ENCODE measurements at regions of chr19 and their contacts with region 1.

Region 1: DNA sequence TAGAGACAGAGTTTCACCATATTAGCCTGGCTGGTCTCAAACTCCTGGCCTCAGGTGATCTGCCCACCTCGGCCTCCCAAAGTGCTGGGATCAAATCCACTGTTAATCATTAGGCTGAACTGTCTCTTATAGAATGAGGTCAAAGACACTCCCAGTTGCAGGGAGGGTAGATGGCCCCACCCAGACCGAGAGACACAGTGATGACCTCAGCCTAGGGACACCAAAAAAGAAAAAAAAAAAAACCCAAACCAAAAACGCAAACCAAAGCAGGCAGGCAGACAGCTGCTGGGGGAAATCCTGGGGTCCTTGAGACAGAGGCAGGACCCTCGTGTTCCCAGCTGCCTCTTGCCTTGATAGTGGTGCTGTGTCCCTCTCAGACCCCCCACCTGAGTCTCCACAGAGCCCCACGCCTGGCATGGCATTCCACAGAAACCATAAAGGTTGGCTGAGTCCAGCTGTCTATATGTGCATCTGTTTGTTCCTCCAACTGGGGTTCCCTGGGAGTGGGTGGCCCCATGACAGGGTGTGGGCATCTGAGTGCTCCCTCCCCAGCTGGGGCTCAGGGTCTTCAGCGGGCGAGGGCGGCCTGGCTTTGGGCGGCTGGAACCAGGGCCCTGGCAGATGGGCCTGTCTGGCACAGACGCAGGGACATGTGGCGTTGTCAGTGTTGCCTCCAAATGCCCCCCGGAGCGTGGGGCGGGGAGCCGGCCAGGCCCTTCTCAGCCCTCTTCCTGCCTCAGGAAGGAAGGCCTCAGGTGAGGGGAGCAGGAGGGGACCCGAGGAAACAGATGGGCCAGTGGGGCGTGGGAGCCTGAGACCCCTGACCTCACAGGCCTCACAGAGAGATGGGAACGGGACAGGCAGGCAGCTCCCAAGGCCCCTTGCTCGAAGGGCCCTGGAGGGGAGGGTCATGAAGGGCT is 5.2 kb downstream of the DAND5 start:
- DNase-seq: no peak
- H3K4me3 ChIP-seq: no peak overlapping the region
- CTCF ChIP-seq: no peak
- POLR2A ChIP-seq: no peak

Region 2: DNA sequence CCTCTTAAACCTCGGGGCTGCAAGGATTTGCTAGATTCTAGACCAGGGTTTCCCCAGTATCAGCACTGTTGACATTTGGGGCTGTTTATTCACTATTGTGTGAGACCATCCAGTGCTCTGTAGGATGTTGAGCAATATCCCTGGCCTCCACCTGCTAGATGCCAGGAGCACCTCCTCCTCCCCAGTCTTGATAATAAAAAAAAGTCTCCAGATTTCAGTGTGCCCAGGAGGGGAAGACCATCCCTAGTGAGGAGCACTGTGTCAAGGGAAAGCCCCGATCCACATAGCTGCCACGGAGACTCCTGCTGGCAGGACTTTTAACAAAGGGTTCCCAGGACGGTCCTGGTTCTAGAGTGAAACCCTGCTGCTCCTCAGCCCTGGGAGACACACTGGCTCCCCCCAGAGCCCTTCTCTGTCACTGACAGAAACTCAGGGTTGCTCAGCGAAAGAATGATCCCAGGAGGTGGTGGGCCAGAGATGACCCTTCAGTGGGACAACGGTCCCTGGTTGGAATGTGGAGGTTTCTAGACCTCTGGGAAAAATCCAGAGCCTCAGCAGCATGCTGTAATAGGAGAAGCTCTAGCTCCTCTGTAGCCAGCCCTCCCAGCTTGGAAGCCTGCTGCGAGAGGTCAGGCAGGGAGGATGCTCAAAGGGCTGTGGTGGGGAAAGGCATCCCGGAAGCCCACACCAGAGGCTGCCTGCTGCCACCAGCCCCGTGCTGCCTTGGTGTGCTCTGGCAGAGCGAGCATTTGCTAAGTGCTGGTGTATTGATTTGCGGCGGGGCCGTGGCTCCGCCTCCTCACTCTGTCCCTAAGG is 107.8 kb after region 1 on chr19:
- intact Hi-C with region 1: no loop called
- DNase-seq: no peak
- H3K4me3 ChIP-seq: no peak overlapping the region
- CTCF ChIP-seq: no peak
- POLR2A ChIP-seq: no peak

Region 3: GRCh38 chr19:13099073-13099999 is 124.8 kb after region 1 on chr19:
- intact Hi-C with region 1: loop called (anchors 5 kb)
- DNase-seq: no peak
- H3K4me3 ChIP-seq: peak overlapping the region; percentile 17
- CTCF ChIP-seq: no peak
- POLR2A ChIP-seq: no peak

Region 4: GRCh38 chr19:13220847-13221246 is 246.3 kb after region 1 on chr19:
- intact Hi-C with region 1: no loop called
- DNase-seq: no peak
- H3K4me3 ChIP-seq: no peak overlapping the region
- CTCF ChIP-seq: no peak
- POLR2A ChIP-seq: no peak

Region 5: GRCh38 chr19:13262450-13262849 is 287.9 kb after region 1 on chr19:
- intact Hi-C with region 1: loop called (anchors 10 kb)
- DNase-seq: no peak
- H3K4me3 ChIP-seq: no peak overlapping the region
- CTCF ChIP-seq: peak in 1 of 3 donors; percentile 19
- POLR2A ChIP-seq: no peak

Measured in lower leg skin (tissue), 4 donors.